H1 (cell line): ENCODE measurements at regions of chr1 and their contacts with region 1.

Region 1: GRCh38 chr1:165129568-165130164 is 226.8 kb downstream of the LMX1A start:
- DNase-seq: peak; percentile 53 to 87
- H3K4me3 ChIP-seq: no peak overlapping the region
- H3K27ac ChIP-seq: no peak overlapping the region
- H3K4me1 ChIP-seq: no peaks in the 10 kb centered on the region
- H3K27me3 ChIP-seq: no peaks in the 10 kb centered on the region
- CTCF ChIP-seq: peak; percentile 68 to 92 (median 83)
- EP300 ChIP-seq: no peak
- POLR2A ChIP-seq: no peak
- RAD21 ChIP-seq: peak; percentile 84 to 86

Region 2: DNA sequence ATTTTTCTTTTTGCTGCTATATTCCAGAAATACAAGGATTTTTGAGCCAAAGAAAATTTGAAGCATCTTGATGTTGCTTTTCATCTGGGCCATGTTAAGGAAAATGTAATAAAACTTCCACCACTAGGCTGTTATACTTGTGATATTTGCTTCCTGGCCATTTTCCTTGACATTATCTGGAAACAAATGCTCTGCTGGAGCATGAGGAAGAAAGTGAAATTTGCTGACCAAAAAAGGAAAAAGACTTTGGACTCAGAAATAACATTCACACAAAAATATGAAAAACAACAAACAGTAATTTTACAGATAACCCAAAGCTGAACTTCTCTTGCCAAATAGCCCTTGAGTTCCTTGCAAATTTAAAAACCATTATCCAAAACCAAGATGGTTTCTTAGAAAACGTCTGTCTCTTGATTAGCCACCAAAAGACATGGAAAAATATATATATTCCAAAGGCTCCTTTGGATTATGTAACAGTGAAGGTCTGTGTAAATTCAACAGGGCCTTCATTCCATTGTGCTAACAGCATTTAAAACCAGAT is 117.6 kb before region 1 on chr1:
- CTCF ChIA-PET with region 1: no interaction called
- POLR2A ChIA-PET with region 1: no interaction called
- DNase-seq: no peak
- H3K4me3 ChIP-seq: no peak overlapping the region
- H3K27ac ChIP-seq: no peak overlapping the region
- H3K4me1 ChIP-seq: no peaks in the 10 kb centered on the region
- H3K27me3 ChIP-seq: no peaks in the 10 kb centered on the region; a peak in 1 of 7 replicates
- CTCF ChIP-seq: no peak
- EP300 ChIP-seq: no peak
- POLR2A ChIP-seq: no peak
- RAD21 ChIP-seq: no peak

Region 3: DNA sequence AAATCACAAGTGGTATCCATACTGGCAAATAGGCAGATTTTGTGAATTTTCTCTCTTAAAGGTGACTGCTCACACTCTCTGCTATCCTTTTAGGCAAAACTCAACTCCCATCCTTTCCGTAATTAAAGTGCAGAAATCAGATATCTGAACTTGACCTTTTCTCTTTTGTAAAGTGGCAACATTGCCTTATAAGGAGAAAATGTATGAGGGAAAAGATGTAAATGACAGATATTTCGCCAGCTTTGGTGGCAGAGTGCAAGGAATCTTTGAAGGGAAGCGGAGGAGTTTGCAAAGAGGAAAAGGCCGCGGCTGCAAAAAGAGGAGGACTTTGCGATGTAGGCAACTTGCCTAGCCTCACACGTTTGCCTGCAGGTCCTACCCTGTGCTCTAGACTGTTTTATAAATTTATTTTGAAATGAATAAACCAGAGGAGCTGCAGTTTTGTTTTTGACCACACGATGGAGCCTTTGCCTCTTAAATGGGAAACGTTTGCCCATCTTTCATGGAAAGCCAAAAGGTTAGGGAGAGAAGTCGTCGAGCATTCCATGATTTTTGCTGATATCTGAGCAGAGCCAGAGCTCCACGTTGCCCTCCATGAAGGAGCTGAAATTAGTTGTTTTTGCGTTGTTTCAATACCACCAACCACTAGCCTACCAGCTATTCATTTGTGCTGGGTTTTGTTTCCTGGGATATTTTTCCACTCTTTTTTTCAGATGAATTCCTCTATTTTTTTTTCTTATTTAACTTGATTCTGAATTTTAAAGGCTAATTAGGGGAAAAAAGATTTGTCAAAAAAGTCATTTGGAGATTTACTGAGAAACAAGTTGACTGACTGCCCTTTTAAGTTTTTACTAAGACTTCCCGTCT is 15.4 kb before region 1 on chr1:
- CTCF ChIA-PET with region 1: interaction called, 50 read pairs
- POLR2A ChIA-PET with region 1: no interaction called
- DNase-seq: peak; percentile 47 to 84
- H3K4me3 ChIP-seq: no peak overlapping the region
- H3K27ac ChIP-seq: no peak overlapping the region
- H3K4me1 ChIP-seq: peaks cover 0 to 7% (median 3%) of the 10 kb centered on the region in 4 experiments; a peak in 4 of 7 replicates
- H3K27me3 ChIP-seq: peaks cover 20 to 42% (median 29%) of the 10 kb centered on the region in 4 experiments
- CTCF ChIP-seq: peak in 2 of 3 experiments; percentile 72; a peak in 3 of 4 replicates
- EP300 ChIP-seq: no peak
- POLR2A ChIP-seq: no peak
- RAD21 ChIP-seq: peak; percentile 81 to 88

Region 4: DNA sequence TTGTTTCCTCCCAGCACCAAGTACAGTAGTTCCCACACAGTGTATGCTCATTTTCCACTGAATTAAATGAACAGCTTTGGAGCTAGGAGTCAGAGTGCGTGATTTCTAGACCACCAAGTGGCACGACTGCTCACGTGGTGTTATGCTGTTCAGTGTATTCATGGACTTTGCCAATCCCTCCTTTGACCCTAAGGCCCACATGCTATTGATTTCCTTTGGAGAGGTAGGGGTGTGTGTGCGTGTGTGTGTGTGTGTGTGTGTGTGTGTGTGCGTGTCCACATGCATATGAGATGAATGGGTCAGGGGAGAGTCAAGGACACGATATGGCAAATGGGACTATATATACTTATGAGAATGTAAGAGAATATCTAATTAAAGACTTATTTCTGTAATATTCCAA is 49.6 kb after region 1 on chr1:
- CTCF ChIA-PET with region 1: no interaction called
- POLR2A ChIA-PET with region 1: no interaction called
- DNase-seq: no peak
- H3K4me3 ChIP-seq: no peak overlapping the region
- H3K27ac ChIP-seq: no peak overlapping the region
- H3K4me1 ChIP-seq: 0 out of 7 replicates have a peak, but pooled peaks cover 0 to 2% (median 0%) of the 10 kb centered on the region in 4 experiments
- H3K27me3 ChIP-seq: no peaks in the 10 kb centered on the region; a peak in 1 of 7 replicates
- CTCF ChIP-seq: no peak
- EP300 ChIP-seq: no peak
- POLR2A ChIP-seq: no peak
- RAD21 ChIP-seq: no peak